Posterior cingulate gyrus (tissue), 11 donors: ENCODE measurements at regions of chr13 and their contacts with region 1.

Region 1: DNA sequence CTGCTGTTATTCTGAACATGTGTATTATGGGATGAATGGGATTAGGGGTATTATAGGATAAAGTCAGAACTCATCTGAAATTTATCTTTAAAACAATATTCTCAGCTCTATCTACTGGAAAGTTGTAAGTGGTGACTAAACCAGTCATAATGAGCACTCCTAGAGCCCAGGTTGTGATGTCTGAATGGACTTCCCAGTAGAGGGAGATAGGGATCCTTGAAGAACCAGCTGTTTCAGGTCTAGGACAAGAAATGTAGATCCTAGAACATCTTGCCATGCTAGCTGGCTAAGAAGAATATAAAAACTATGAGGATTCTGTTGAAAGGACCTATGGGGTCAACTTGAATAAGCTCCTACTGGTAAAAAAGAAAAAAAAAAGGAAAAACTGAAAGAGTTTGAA is 310.8 kb downstream of the SLC7A1 start:
- DNase-seq: no peak

Region 2: GRCh38 chr13:29125191-29125933 is 159.4 kb before region 1 on chr13:
- intact Hi-C with region 1: no loop called
- DNase-seq: no peak

Region 3: DNA sequence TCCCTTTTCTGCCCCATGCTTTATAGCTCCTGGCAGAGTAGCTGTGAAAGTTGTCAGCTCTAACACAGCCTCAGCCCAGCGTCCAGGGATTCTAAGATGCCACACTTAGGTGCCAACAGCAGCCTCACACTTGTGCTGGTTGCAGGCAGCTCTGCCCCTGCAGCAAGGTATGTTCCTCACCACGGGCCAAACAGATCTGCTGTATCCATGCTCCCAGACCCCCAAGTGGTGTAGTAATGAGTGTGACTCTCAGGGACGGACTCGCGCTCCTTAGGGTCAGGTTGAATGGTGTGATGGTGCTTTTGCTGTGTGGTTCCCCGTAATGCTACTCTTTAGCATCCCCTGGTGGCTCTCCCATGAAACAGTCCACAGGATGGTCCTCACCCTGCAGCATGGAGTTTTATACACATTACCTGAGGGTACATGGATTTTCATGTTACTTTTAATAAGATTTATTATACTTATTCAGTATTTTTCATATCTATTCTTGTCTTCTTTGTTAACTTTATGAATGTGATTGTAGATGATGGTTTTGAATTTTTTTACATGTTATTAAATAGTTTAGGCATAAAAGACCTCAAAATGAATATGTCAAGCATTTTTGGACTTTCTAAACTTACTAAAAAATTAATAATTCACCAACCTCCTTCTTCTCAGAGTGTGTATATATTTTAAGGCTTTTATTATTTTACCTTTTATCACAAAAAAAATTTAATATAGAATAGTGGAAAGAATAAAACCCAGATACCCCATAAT is 78.3 kb after region 1 on chr13:
- intact Hi-C with region 1: loop called (anchors 1 kb)
- DNase-seq: peak in 8 of 10 donors; percentile 22 to 85 (median 56)